ENCODE measurements at regions of chr11 and their contacts with region 1.

Region 1: DNA sequence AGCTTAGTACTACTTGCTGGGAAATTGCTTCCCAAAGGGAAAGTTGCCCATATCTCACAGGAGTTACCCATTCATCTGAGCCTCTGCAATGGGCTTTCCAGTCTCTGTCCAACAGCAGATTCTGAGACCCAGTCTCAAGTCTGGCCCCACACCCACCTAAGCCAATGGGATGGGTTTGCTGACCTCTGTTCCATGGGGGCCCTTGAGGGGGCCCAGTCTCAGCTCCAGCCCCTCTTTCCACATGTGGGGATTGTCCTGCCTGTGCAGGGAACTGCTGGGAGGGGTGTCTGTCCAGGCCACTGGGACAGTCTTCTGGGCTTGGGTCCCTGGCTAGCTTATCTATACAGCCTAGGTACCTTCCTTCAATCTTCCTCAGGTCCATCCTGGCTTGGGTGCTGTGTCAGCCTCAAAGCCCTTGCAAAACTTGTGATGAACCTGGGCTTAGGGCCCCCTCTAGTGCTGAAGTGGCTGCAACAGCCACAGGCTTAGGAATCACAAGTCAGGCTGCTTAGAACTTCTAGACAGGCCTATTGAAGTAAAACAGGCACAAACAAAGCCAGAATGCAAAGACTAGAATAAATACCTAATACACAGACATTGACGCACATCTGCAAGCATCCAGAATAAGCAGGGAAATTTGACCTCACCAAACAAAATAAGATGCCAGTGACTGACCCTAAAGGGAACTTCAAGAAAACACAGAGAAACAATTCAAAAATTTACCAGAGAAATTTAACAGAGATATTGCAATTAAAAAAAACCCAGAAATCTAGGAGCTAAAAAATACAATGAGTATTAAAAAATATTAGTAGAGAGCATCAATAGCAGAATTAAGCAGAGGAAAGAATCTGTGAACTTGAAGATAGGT is 11.7 kb upstream of the PATL1 start:
- DNase-seq: peak; percentile 69 to 85 (median 81)
- H3K4me3 ChIP-seq: no peak overlapping the region
- H3K27ac ChIP-seq: no peak overlapping the region
- H3K4me1 ChIP-seq: no peaks in the 10 kb centered on the region
- H3K27me3 ChIP-seq: no peaks in the 10 kb centered on the region
- CTCF ChIP-seq: peak; percentile 53 to 84 (median 78)
- POLR2A ChIP-seq: no peak

Region 2: DNA sequence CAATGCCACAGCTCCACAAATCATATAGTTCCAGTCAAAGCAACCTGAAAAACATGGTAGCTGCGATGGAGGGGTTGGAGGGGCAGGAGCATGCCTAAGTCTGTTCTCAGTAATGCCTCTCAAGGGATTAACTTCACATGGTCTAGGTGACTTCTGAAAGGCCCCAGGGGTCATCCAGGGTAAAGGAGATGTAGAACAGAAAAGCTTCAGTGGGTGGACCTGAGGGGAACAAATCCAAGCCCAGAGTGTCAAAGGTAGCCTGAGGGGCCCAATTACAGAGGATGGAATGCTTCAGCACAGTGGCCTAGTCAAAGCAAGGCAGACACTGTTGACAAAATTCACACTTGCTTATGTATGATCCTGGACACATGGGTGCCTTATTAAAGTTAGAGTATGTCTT is 145.8 kb before region 1 on chr11:
- intact Hi-C with region 1: loop called (anchors 5 to 10 kb)
- DNase-seq: no peak
- H3K4me3 ChIP-seq: no peak overlapping the region
- H3K27ac ChIP-seq: no peak overlapping the region
- H3K4me1 ChIP-seq: peaks cover 7 to 12% of the 10 kb centered on the region in 2 donors
- H3K27me3 ChIP-seq: no peaks in the 10 kb centered on the region
- CTCF ChIP-seq: no peak
- POLR2A ChIP-seq: no peak

Measured in adrenal gland (tissue), 19 donors.